Breast epithelium (tissue), 4 donors: ENCODE measurements at regions of chr3 and their contacts with region 1.

Region 1: GRCh38 chr3:82163907-82164520 is 402.6 kb upstream of the GBE1 start:
- DNase-seq: no peak
- H3K4me3 ChIP-seq: no peak overlapping the region
- H3K27ac ChIP-seq: no peak overlapping the region
- H3K4me1 ChIP-seq: no peaks in the 10 kb centered on the region
- H3K27me3 ChIP-seq: no peaks in the 10 kb centered on the region
- CTCF ChIP-seq: no peak
- POLR2A ChIP-seq: no peak

Region 2: GRCh38 chr3:82128271-82128670 is 35.7 kb before region 1 on chr3:
- intact Hi-C with region 1: loop called (anchors 5 kb)
- DNase-seq: no peak
- H3K4me3 ChIP-seq: no peak overlapping the region
- H3K27ac ChIP-seq: no peak overlapping the region
- H3K4me1 ChIP-seq: no peaks in the 10 kb centered on the region
- H3K27me3 ChIP-seq: no peaks in the 10 kb centered on the region
- CTCF ChIP-seq: no peak
- POLR2A ChIP-seq: no peak

Region 3: DNA sequence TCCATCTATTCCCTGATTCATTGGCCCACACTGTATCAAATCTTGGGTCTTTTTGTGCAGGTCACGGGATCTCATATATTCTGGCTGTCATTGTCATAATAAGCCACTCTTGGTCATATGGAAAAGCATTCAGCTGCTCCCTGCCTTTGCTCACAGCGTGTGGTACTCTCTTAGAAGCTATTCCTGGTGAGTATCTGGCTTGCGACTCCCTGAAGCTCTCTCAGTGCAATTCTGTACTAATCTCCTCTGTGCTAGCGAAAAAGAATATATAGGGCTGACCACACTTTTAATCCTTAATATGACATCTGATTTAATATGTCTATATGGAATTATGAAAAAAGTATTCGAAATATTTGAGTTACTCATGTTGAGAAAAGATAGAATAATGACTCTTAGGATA is 38.3 kb after region 1 on chr3:
- intact Hi-C with region 1: no loop called
- DNase-seq: no peak
- H3K4me3 ChIP-seq: no peak overlapping the region
- H3K27ac ChIP-seq: no peak overlapping the region
- H3K4me1 ChIP-seq: no peaks in the 10 kb centered on the region
- H3K27me3 ChIP-seq: no peaks in the 10 kb centered on the region
- CTCF ChIP-seq: no peak
- POLR2A ChIP-seq: no peak